AG04450 (cell line): ENCODE measurements at regions of chr2 and their contacts with region 1.

Region 1: GRCh38 chr2:166127217-166128155 is at the start of gene SCN1A:
- DNase-seq: peak; percentile 7
- H3K4me3 ChIP-seq: no peak within 1 kb of the TSS; the same call in 1 of the 2 replicates
- H3K27ac ChIP-seq: no peak within 1 kb of the TSS
- H3K27me3 ChIP-seq: peaks cover 5% of the 10 kb centered on the region
- CTCF ChIP-seq: peak; percentile 71
- polyA plus RNA-seq, gene SCN1A: not detected in 2 replicates

Region 2: GRCh38 chr2:166000401-166000800 is 127.1 kb before region 1 on chr2:
- CTCF ChIA-PET with region 1: no interaction called
- POLR2A ChIA-PET with region 1: no interaction called
- DNase-seq: no peak
- H3K4me3 ChIP-seq: no peak overlapping the region
- H3K27ac ChIP-seq: no peak overlapping the region
- H3K27me3 ChIP-seq: no peaks in the 10 kb centered on the region
- CTCF ChIP-seq: no peak

Region 3: DNA sequence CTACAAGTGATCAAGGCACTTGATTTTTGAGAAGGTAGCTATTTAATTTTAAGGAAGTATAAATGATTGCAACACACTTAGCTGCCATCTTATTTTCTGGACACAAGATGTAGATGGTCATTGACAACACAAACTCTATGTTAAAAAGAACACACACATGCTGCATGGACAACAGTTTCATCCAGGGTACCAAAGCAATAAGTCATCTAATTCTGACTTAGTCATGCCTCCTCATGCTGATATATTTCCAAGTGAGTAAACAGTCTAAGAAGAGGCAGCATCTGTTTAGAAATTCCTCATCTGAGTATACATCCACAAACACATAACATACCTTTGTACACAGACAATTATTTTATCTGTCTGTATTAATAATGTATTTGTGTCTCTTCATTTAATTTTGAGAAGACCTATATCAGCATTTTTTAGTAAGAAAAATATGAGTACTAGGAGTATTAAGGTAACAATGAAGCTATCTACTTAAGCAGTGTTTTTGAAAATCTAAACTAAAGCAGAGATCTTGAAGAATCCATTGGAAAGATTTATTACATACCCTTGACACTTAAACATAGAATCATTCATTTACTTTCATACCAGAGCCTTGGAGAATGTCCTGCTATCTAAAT is 84.6 kb before region 1 on chr2:
- CTCF ChIA-PET with region 1: interaction called, 15 read pairs
- POLR2A ChIA-PET with region 1: no interaction called
- DNase-seq: no peak
- H3K4me3 ChIP-seq: no peak overlapping the region
- H3K27ac ChIP-seq: no peak overlapping the region
- H3K27me3 ChIP-seq: no peaks in the 10 kb centered on the region
- CTCF ChIP-seq: no peak

Region 4: DNA sequence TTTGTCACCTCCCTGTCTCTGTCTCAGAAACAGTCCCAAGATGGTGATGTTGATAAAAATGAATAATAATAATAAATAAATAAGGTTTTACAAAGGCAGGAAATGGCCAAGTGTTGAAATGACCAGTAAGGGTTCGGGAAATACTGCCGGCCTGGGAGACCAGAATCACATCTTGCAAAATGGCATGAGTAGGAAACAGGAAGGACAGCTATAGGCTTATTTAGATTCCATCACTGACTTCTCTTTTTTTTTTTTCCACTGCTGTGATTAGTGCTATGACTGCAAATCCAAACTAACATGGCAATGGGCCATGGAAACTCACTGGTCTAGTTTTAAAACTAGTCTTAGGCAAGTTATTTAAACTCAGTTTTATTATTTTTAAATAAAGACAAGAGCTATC is 60.3 kb before region 1 on chr2:
- CTCF ChIA-PET with region 1: interaction called, 332 read pairs
- POLR2A ChIA-PET with region 1: no interaction called
- DNase-seq: no peak
- H3K4me3 ChIP-seq: no peak overlapping the region
- H3K27ac ChIP-seq: no peak overlapping the region
- H3K27me3 ChIP-seq: no peaks in the 10 kb centered on the region
- CTCF ChIP-seq: no peak

Region 5: GRCh38 chr2:166106431-166107015 is 21.0 kb before region 1 on chr2:
- CTCF ChIA-PET with region 1: interaction called, 13 read pairs
- POLR2A ChIA-PET with region 1: no interaction called
- DNase-seq: no peak
- H3K4me3 ChIP-seq: no peak overlapping the region
- H3K27ac ChIP-seq: no peak overlapping the region
- H3K27me3 ChIP-seq: no peaks in the 10 kb centered on the region
- CTCF ChIP-seq: peak; percentile 55

Region 6: GRCh38 chr2:166140932-166141331 is 13.4 kb after region 1 on chr2:
- CTCF ChIA-PET with region 1: interaction called, 39 read pairs
- POLR2A ChIA-PET with region 1: no interaction called
- DNase-seq: no peak
- H3K4me3 ChIP-seq: no peak overlapping the region
- H3K27ac ChIP-seq: no peak overlapping the region
- H3K27me3 ChIP-seq: no peaks in the 10 kb centered on the region
- CTCF ChIP-seq: no peak

Region 7: DNA sequence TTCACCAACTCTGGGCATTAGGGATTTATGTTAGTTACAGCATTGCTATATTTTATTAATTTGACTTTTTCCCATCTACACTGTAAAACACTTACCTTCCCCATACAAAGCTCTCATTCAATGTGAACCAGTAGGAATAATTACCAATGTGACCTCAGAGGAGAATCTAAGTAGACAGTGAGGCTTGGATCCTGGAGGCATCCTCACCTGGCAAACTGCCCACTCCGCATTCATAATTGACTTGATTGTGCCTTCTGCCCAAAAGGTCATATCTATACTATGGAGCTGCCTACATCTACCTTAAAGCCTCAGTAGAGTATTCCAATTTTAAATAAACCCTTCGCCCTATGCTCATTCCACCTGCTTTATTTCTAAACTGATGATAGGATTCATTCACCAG is 45.8 kb after region 1 on chr2:
- CTCF ChIA-PET with region 1: interaction called, 25 read pairs
- POLR2A ChIA-PET with region 1: no interaction called
- DNase-seq: no peak
- H3K4me3 ChIP-seq: no peak overlapping the region
- H3K27ac ChIP-seq: no peak overlapping the region
- H3K27me3 ChIP-seq: no peaks in the 10 kb centered on the region
- CTCF ChIP-seq: no peak